Transverse colon (tissue), 4 donors: ENCODE measurements at regions of chr12 and their contacts with region 1.

Region 1: DNA sequence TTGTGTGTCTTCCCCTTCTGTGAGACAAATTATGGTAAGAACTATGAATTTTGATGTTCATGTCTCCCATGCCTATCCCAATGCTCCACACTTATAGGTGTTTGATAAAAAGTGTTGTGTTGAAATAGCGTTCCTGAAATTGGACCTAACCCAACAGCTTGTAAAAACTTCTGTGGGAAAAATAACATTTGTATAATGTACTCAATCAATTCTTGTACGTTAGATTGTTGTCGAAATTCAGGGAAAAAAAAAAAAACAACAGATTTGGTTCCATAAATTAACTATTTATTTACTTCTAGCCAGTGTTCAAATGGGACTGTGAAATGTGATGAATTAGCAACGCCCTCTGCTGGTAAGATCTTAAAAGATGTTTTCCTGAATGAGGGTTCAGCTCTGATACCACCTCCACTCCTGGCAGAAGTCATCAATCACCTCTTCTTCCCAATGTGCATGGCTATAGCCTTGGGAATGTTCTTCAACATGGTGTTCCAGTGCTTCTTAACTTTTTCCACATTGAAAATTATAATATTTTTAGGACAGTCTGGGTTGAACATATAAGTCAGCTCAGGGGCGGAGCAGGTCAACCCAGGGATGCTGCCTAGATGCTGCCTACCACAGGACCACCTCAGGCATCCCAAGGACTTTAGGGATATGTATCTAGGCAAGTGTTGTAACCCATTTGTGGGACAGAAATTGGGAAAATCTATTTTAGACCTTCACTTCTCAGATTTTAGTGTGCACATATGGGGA is 170.6 kb downstream of the OTOGL start:
- DNase-seq: no peak
- H3K4me3 ChIP-seq: no peak overlapping the region
- H3K27ac ChIP-seq: no peak overlapping the region
- H3K4me1 ChIP-seq: no peaks in the 10 kb centered on the region
- H3K27me3 ChIP-seq: no peaks in the 10 kb centered on the region
- CTCF ChIP-seq: peak; percentile 45 to 63 (median 56)
- EP300 ChIP-seq: no peak
- POLR2A ChIP-seq: no peak

Region 2: GRCh38 chr12:79555028-79555930 is 714.7 kb before region 1 on chr12:
- in situ Hi-C with region 1: no loop called
- intact Hi-C with region 1: loop called (anchors 10 kb)
- DNase-seq: no peak
- H3K4me3 ChIP-seq: no peak overlapping the region
- H3K27ac ChIP-seq: no peak overlapping the region
- H3K4me1 ChIP-seq: peaks cover 4 to 33% (median 11%) of the 10 kb centered on the region in 4 donors
- H3K27me3 ChIP-seq: no peaks in the 10 kb centered on the region
- CTCF ChIP-seq: peak; percentile 49 to 74 (median 54)
- EP300 ChIP-seq: no peak
- POLR2A ChIP-seq: no peak

Region 3: DNA sequence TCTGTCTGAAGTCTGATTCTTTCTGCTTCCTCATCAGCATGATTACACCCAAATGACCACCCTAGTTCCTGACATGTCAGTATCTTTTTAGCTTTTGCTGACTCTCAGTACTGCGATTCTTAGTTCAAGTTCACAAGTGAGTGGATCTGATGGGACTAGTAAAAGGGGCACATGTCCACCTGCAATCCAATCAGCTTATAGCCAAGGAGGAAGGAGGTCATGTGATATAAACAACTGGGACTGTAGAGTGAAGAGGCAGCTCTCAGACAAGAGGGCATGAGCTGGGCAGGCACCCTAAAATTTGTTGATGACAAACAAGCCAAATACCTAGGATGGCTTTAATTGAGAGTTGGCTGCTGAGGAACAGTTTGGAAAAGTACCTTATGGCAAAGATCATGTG is 238.7 kb before region 1 on chr12:
- in situ Hi-C with region 1: no loop called
- intact Hi-C with region 1: no loop called
- DNase-seq: no peak
- H3K4me3 ChIP-seq: no peak overlapping the region
- H3K27ac ChIP-seq: peak overlapping the region in 3 of 4 donors; percentile 18 to 56 (median 27)
- H3K4me1 ChIP-seq: peaks cover 0 to 6% (median 0%) of the 10 kb centered on the region in 4 donors
- H3K27me3 ChIP-seq: no peaks in the 10 kb centered on the region
- CTCF ChIP-seq: no peak
- EP300 ChIP-seq: no peak
- POLR2A ChIP-seq: no peak

Region 4: GRCh38 chr12:80129895-80130530 is 140.0 kb before region 1 on chr12:
- in situ Hi-C with region 1: no loop called
- intact Hi-C with region 1: no loop called
- DNase-seq: no peak
- H3K4me3 ChIP-seq: no peak overlapping the region
- H3K27ac ChIP-seq: no peak overlapping the region
- H3K4me1 ChIP-seq: no peaks in the 10 kb centered on the region
- H3K27me3 ChIP-seq: no peaks in the 10 kb centered on the region
- CTCF ChIP-seq: no peak
- EP300 ChIP-seq: no peak
- POLR2A ChIP-seq: no peak

Region 5: DNA sequence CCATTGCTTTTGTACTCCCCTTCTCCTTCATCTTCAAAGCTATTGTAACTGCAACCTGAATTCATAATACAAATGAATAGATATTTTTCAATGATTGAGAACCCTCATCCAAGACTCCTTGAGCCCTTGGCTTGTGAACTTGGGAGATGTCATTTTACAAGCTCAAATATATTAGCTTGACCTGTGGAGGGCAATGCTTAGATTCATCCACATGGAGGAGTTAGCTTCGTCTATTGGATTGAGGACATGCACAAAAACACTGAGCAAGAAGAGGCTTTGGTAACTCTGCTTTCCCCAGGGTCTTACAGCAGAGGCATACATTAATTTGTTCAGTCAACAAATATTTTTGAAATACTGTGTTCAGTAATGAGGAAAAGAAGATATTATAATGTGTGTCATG is 69.6 kb before region 1 on chr12:
- in situ Hi-C with region 1: no loop called
- intact Hi-C with region 1: loop called (anchors 10 kb)
- DNase-seq: no peak
- H3K4me3 ChIP-seq: no peak overlapping the region
- H3K27ac ChIP-seq: no peak overlapping the region
- H3K4me1 ChIP-seq: no peaks in the 10 kb centered on the region
- H3K27me3 ChIP-seq: no peaks in the 10 kb centered on the region
- CTCF ChIP-seq: no peak
- EP300 ChIP-seq: no peak
- POLR2A ChIP-seq: no peak

Region 6: DNA sequence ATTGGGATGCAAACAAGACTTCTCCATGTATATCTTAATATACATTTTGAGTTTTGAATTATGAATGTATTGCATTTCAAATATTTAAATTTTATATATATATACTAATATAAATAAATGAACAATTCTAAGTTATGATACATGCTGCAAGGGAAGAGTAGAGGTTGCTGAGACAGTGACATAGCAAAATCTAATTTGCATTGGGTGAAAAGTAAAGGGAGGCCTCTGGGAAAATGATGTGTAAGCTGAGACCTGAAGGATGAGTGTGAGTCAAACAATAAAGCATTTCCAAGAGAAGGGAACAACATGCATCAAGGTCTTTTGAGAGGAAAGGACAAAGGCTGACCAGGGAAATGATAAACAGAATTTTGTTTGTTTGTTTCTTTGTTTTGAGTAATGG is 111.1 kb after region 1 on chr12:
- in situ Hi-C with region 1: no loop called
- intact Hi-C with region 1: no loop called
- DNase-seq: no peak
- H3K4me3 ChIP-seq: no peak overlapping the region
- H3K27ac ChIP-seq: no peak overlapping the region
- H3K4me1 ChIP-seq: no peaks in the 10 kb centered on the region
- H3K27me3 ChIP-seq: no peaks in the 10 kb centered on the region
- CTCF ChIP-seq: no peak
- EP300 ChIP-seq: no peak
- POLR2A ChIP-seq: no peak